CD8-positive, alpha-beta memory T cell (primary cell): ENCODE measurements at regions of chr2 and their contacts with region 1.

Region 1: DNA sequence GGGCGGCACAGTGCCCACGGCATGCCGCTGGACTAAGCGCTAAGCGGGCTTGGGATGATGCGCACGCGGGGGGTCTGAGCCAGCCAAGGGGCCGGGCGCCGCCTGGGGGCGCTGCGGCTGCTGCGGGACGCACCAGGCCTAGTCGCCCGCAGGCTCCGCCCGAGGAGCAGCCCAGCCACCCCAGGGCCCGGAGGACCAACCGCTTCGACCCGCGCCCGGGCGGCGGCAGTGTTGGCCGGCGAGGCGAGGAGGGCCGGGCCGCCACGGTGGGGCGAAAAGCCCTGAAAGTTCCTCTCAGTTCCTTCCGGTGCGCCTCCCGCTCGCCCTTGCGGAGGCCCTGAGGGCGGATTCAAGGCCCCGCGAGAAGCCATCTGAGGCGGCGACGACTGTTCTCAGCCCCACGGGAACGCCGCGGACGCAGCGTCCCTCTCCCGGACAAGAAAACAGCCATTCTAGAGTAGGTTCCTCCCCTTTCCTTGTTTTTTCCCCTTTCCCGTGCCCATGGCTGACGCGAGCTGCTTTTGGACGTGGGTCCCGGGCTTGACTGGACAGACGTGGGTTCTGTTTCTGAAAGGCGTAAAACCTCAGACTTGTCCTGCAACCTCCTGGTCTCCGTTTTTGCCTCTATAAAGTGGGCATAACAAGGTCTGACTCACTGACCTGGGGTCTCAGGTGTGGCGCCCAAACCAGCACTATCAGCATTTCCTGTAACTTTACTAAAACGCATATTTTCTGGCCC is at the start of gene ANKAR:
- DNase-seq: peak; percentile 74 to 87 (median 83)
- H3K4me3 ChIP-seq: peak within 1 kb of the TSS; percentile 69
- H3K4me3 Mint-ChIP-seq: peak within 1 kb of the TSS; percentile 92 to 99 (median 96)
- H3K27ac ChIP-seq: peak within 1 kb of the TSS; percentile 77
- H3K27ac Mint-ChIP-seq: peak within 1 kb of the TSS; percentile 96 to 100 (median 99)
- H3K4me1 ChIP-seq: peaks cover 18% of the 10 kb centered on the region
- H3K4me1 Mint-ChIP-seq: peaks cover 42 to 51% (median 46%) of the 10 kb centered on the region in 3 donors
- H3K27me3 ChIP-seq: no peaks in the 10 kb centered on the region
- H3K27me3 Mint-ChIP-seq: no peaks in the 10 kb centered on the region
- total RNA-seq, gene ANKAR: 3.2 to 3.3 TPM

Region 2: DNA sequence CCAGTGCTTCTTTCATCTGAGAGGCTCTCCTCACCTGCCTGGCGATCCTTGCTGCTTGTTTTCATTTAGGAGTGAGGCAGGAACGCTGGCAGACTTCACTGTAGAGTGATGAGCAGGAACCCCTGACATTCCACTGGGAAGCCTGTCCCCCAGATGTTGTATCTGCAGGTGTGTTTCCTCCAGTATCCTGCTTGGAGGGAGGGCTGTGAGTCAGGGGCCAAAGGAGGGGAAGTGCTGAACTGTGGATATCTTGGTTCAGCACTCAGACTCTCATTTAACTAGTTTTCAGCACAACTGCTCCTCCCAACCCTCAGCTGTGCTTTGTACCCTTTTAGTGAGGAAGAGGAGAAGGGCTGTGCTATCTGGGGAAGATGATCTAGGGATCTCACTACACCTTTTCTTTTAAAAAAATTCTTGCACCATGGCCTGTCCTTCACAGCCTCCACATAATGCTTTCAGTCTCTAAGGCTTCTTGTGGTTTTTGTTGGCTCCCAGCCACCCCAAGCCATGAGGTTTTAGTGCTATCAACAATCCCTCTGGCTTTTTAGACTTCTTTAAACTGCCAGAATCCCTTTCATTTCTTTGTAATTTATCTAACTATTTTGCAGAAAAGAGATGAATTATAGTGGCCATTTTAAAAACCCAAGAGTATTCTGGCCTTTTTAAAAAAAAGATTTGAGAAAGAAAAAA is 11.1 kb after region 1 on chr2:
- CTCF ChIA-PET with region 1: interaction called, 17 read pairs
- POLR2A ChIA-PET with region 1: no interaction called
- DNase-seq: no peak
- H3K4me3 ChIP-seq: no peak overlapping the region
- H3K4me3 Mint-ChIP-seq: no peak overlapping the region
- H3K27ac ChIP-seq: no peak overlapping the region
- H3K27ac Mint-ChIP-seq: peak overlapping the region in 4 of 8 donors; percentile 31 to 81 (median 50)
- H3K4me1 ChIP-seq: peaks cover 10% of the 10 kb centered on the region
- H3K4me1 Mint-ChIP-seq: peaks cover 17 to 40% (median 34%) of the 10 kb centered on the region in 3 donors
- H3K27me3 ChIP-seq: no peaks in the 10 kb centered on the region
- H3K27me3 Mint-ChIP-seq: no peaks in the 10 kb centered on the region

Region 3: GRCh38 chr2:189698020-189698887 is 23.7 kb after region 1 on chr2:
- CTCF ChIA-PET with region 1: interaction called, 10 read pairs
- POLR2A ChIA-PET with region 1: interaction called, 3 read pairs
- DNase-seq: peak in 3 of 5 donors; percentile 16 to 46 (median 38)
- H3K4me3 ChIP-seq: no peak overlapping the region
- H3K4me3 Mint-ChIP-seq: peak overlapping the region in 1 of 7 donors; percentile 3
- H3K27ac ChIP-seq: no peak overlapping the region
- H3K27ac Mint-ChIP-seq: no peak overlapping the region
- H3K4me1 ChIP-seq: no peaks in the 10 kb centered on the region
- H3K4me1 Mint-ChIP-seq: peaks cover 0 to 5% (median 1%) of the 10 kb centered on the region in 3 donors
- H3K27me3 ChIP-seq: no peaks in the 10 kb centered on the region
- H3K27me3 Mint-ChIP-seq: no peaks in the 10 kb centered on the region